ENCODE measurements at regions of chrX and their contacts with region 1.

Region 1: DNA sequence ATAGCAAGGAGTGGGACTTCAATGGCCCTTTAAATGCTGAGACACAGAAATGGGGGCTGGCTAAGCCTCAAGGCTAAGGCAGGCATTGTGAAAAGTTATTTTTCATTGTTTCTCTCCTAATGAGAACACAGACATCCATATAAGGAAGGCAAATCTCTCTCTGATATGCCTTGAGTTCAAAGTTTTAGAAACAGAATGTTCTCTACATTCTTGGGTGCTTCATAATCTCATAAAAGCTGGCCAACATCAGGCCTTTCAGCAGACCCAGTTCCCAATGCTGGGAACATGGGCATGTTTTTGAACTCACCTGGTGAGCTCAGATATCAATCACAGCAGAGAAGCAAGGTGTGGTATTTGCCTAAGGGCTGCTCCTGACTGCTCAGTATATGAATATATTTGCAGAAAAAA is 19.4 kb upstream of the RAB40A start:
- DNase-seq: no peak
- H3K4me3 ChIP-seq: no peak overlapping the region
- H3K27ac ChIP-seq: peak overlapping the region; percentile 72 to 80
- H3K4me1 ChIP-seq: peaks cover 0 to 14% of the 10 kb centered on the region in 2 donors
- H3K27me3 ChIP-seq: no peaks in the 10 kb centered on the region
- CTCF ChIP-seq: no peak

Region 2: DNA sequence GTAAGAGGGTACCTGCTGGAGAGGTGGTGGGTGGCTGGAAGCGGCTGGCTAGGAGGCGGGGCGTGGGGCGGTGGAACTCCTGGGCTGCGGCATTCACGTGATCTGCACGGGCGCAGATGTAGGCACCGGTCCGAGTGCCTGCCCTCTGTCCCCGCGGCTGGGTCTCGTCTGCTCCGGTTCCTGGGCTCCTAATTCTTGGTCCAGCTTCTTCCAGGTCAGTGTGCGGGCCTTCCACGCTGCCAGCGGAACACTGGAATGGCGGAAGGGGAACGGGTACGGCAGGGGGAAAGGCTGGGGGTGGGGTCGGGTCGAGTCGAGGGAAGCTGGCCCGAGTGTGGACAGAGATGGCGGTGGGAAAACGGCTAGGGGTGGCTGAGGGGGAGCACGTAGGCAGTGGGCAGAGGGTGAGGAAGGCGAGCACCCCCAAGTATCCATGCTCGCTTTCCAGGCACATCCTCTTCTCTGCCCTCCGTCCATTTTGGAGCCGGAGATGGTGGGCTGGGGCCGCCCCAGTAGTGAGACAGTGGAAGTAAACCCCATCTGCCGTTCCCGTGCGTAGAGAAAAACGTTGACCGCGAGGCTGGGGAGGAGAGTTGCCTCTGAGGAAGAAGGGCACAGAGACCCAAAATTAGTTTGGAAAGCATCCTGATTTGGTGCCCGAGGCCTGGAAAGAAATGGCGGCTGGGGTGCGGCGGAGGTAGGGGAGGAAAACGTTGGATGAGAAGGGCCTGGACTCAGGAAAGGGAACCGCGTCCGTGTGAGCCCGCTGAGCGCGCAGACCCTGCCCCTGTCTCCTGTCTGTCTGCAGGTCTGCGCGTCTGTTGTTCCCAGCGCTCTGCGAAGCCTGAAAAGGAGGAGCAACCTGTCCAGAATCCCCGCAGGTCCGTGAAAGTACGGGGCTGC is 46.9 kb after region 1 on chrX and contains the start of gene TCEAL4:
- intact Hi-C with region 1: loop called (anchors 5 kb)
- DNase-seq: peak in 1 of 2 donors; percentile 74
- H3K4me3 ChIP-seq: peak within 1 kb of the TSS; percentile 74 to 83
- H3K27ac ChIP-seq: peak within 1 kb of the TSS; percentile 84 to 86
- H3K4me1 ChIP-seq: no peaks in the 10 kb centered on the region
- H3K27me3 ChIP-seq: no peaks in the 10 kb centered on the region
- CTCF ChIP-seq: no peak
- total RNA-seq, gene TCEAL4: 91.7 TPM

Region 3: DNA sequence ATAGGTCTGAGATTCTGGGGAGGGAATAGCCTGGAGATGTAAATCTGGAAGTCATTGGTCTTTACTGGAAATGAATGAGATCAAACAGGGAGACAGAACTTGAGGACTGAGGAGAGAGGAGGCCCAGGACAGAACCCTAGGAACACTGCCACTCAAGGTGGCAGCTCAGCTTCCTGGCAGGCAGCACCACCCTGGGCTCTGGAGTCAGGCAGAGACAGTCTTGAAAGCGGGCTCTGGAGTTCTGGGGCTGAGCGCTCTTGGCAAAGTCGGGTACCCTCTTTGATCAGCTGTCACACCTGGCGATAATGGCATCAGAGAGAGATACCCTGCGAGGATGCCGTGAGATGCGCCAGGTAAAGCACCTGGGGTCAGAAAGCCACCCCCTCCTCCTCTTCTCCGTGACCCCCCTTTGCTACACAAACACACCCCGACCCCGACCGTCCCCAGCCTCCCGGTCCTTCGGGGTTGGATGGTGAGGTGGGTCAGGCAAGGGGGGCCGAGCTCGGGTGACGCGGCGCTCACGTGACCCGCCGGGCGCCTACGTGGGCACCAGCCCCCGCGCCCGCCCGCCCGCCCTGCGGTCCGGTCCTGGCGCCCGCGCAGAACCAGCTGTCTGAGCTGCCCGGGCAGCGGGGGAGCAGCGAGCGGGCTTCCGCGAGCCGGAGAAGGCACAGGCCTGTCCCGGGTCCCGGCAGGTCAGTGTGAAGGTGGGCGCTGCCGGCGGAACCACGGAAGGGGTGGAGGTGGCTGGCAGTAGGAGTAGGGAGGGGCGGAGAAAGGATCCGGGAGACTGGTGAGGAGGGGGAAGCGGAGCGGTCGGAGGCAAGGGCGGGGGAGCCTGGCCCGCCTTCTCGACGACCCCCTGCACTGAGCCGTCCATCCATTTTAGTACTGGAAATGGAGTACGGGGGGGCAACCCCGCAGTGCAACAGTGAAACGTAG is 68.9 kb after region 1 on chrX and contains the start of gene TCEAL3:
- intact Hi-C with region 1: loop called (anchors 5 kb)
- DNase-seq: peak in 1 of 2 donors; percentile 79
- H3K4me3 ChIP-seq: peak within 1 kb of the TSS; percentile 75 to 85
- H3K27ac ChIP-seq: peak within 1 kb of the TSS; percentile 93 to 94
- H3K4me1 ChIP-seq: no peaks in the 10 kb centered on the region
- H3K27me3 ChIP-seq: no peaks in the 10 kb centered on the region
- CTCF ChIP-seq: no peak
- total RNA-seq, gene TCEAL3: 11.3 TPM